GM13977 (cell line): ENCODE measurements at regions of chr15 and their contacts with region 1.

Region 1: DNA sequence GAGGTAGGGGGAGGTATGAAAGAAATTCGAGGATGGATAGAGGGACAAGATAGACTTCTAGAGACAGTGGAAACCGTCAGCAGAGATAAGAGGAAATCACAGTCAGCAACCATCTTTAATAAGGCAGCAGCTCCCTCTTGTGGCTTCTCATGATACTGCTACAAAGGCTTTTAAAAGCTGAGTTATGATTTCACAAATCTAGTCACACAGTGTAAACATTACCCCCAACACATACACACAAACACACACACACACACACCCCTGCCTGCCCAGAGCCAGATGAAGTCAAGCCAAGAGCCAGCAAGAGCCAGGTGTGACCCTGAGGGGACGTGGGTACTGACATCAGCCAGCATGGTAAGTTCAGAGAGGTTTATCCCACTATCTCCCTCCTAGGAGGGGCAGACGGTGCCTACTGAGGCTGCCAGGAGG is 18.9 kb upstream of the TGM5 start:
- DNase-seq: peak; percentile 86
- CTCF ChIP-seq: peak; percentile 85

Region 2: GRCh38 chr15:43133430-43134156 is 152.0 kb before region 1 on chr15 and contains the start of gene TMEM62:
- in situ Hi-C with region 1: no loop called
- DNase-seq: peak; percentile 95
- CTCF ChIP-seq: no peak

Region 3: GRCh38 chr15:43239732-43240491 is 45.7 kb before region 1 on chr15:
- in situ Hi-C with region 1: loop called (anchors 10 kb)
- DNase-seq: peak; percentile 62
- CTCF ChIP-seq: no peak